Heart left ventricle (tissue), 16 donors: ENCODE measurements at regions of chr1 and their contacts with region 1.

Region 1: GRCh38 chr1:40625066-40625465 is 40.4 kb downstream of the RIMS3 start:
- DNase-seq: peak in 4 of 5 donors; percentile 23 to 52 (median 34)
- ATAC-seq: peak; percentile 72 to 92 (median 84)
- H3K4me3 ChIP-seq: no peak overlapping the region
- H3K27ac ChIP-seq: no peak overlapping the region
- H3K4me1 ChIP-seq: peaks cover 0 to 6% (median 0%) of the 10 kb centered on the region in 12 donors
- H3K27me3 ChIP-seq: no peaks in the 10 kb centered on the region
- CTCF ChIP-seq: peak in 10 of 12 donors; percentile 25 to 56 (median 33)
- POLR2A ChIP-seq: no peak

Region 2: GRCh38 chr1:40316595-40317393 is 308.3 kb before region 1 on chr1 and contains the start of gene COL9A2:
- intact Hi-C with region 1: no loop called
- DNase-seq: peak in 2 of 5 donors; percentile 29 to 74
- ATAC-seq: peak in 3 of 4 donors; percentile 16 to 58 (median 51)
- H3K4me3 ChIP-seq: peak within 1 kb of the TSS; percentile 6 to 60 (median 47)
- H3K27ac ChIP-seq: no peak within 1 kb of the TSS
- H3K4me1 ChIP-seq: peaks cover 0 to 44% (median 17%) of the 10 kb centered on the region in 12 donors
- H3K27me3 ChIP-seq: peaks cover 15 to 51% (median 25%) of the 10 kb centered on the region in 9 donors
- CTCF ChIP-seq: no peak
- POLR2A ChIP-seq: no peak
- total RNA-seq, gene COL9A2: 0.14 to 1.4 (median 0.50) TPM in 8 of 9 donors, not detected in the other

Region 3: GRCh38 chr1:40606978-40607377 is 18.1 kb before region 1 on chr1:
- intact Hi-C with region 1: no loop called
- DNase-seq: no peak
- ATAC-seq: peak in 1 of 4 donors; percentile 20
- H3K4me3 ChIP-seq: no peak overlapping the region
- H3K27ac ChIP-seq: no peak overlapping the region
- H3K4me1 ChIP-seq: peaks cover 0 to 3% (median 0%) of the 10 kb centered on the region in 12 donors
- H3K27me3 ChIP-seq: peaks cover 0 to 3% (median 0%) of the 10 kb centered on the region in 9 donors
- CTCF ChIP-seq: no peak
- POLR2A ChIP-seq: no peak

Region 4: DNA sequence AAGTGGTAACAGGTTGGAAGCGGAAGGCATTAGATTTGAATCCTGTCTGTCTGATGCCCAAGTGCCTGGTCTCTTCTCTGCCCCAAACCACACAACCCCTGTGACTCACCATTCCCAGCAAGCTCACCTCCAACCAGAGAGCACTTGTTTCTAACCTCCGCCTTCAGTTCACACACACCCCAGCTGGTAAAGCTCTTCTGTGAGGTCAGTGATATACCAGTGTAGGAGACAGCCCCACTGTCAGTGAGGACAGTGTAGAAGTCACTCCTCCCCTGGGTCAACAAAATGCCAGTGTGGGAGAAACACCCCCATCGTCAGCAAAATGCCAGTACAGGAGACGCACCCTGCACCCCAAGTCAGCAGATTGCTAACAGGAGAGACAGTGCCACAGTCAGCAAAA is 37.8 kb after region 1 on chr1:
- intact Hi-C with region 1: loop called in 5 of 10 experiments (anchors 5 kb)
- DNase-seq: no peak
- ATAC-seq: no peak
- H3K4me3 ChIP-seq: no peak overlapping the region
- H3K27ac ChIP-seq: peak overlapping the region in 1 of 12 donors; percentile 17
- H3K4me1 ChIP-seq: peaks cover 0 to 20% (median 9%) of the 10 kb centered on the region in 12 donors
- H3K27me3 ChIP-seq: no peaks in the 10 kb centered on the region
- CTCF ChIP-seq: no peak
- POLR2A ChIP-seq: no peak

Region 5: DNA sequence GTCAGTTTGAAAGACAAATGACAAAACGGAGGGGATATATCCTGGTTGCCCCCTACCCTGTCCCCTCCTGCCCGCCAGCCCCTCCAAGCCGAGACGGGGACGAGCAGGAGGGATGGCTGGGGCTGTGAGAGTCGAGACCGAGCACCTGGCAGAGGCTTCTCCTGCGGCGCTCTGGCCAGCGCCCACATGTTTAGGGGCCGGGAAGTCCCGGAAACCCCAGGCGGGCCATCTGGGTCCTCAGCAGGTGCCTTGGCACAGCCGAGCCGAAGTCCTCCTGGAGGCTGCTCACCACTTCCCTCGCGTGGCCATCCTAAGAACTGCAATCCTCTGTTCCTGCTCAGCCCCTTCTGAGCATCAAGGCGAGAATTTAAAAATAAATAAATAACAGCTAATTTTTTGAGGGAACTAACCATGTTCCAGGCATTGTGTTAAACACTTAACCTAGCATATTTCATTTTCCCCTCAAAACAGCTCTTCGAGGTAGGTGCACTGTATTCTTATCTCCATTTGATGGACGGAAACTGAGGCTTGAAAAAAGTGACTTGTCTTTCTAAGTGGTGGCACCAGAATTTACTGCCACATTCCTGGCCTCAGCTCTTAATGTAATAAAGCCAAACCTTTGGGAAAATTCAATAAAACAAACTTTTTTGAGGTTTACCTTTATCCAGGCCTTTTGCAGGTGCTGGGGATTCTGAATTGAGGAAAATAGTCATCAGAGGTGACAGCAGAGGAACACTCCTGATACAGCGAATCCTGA is 43.9 kb after region 1 on chr1:
- intact Hi-C with region 1: loop called in 5 of 10 experiments (anchors 5 kb)
- DNase-seq: peak; percentile 67 to 87 (median 78)
- ATAC-seq: peak in 3 of 4 donors; percentile 64 to 70 (median 70)
- H3K4me3 ChIP-seq: peak overlapping the region in 2 of 12 donors; percentile 2 to 21
- H3K27ac ChIP-seq: no peak overlapping the region
- H3K4me1 ChIP-seq: peaks cover 0 to 18% (median 7%) of the 10 kb centered on the region in 12 donors
- H3K27me3 ChIP-seq: no peaks in the 10 kb centered on the region
- CTCF ChIP-seq: peak; percentile 92 to 98 (median 94)
- POLR2A ChIP-seq: no peak

Region 6: GRCh38 chr1:40774266-40774998 is 149.4 kb after region 1 on chr1:
- intact Hi-C with region 1: loop called in 1 of 10 experiments (anchors 10 kb)
- DNase-seq: peak in 2 of 5 donors; percentile 38 to 53
- ATAC-seq: peak in 3 of 4 donors; percentile 36 to 68 (median 56)
- H3K4me3 ChIP-seq: no peak overlapping the region
- H3K27ac ChIP-seq: peak overlapping the region in 1 of 12 donors; percentile 9
- H3K4me1 ChIP-seq: peaks cover 0 to 15% (median 5%) of the 10 kb centered on the region in 12 donors
- H3K27me3 ChIP-seq: no peaks in the 10 kb centered on the region
- CTCF ChIP-seq: peak; percentile 64 to 86 (median 76)
- POLR2A ChIP-seq: no peak